PC-9 (cell line): ENCODE measurements at regions of chr11 and their contacts with region 1.

Region 1: DNA sequence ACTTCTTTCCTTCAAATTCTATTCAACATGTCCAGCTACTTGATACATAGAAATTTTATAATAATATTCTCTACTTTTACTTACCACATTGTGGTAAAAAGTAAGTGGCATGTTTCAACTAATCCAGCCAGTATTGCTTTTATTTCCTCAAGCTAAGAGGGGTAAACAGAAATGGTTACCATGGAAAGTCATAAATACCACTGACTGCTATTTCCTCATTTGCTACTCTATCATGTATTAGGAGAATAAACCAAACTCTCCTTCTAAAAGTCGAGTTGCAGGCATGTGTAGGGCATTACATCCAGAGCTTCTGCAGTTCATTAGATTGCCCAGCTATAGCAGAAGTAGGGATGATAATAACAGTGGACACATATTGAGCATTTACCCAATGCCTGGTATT is 208.4 kb downstream of the MAML2 start:
- DNase-seq: peak in 1 of 2 experiments; percentile 83
- H3K4me3 ChIP-seq: no peak overlapping the region
- H3K27ac ChIP-seq: peak overlapping the region; percentile 5; the same call in 1 of the 2 replicates
- H3K4me1 ChIP-seq: peaks cover 26% of the 10 kb centered on the region
- H3K27me3 ChIP-seq: no peaks in the 10 kb centered on the region
- CTCF ChIP-seq: no peak

Region 2: DNA sequence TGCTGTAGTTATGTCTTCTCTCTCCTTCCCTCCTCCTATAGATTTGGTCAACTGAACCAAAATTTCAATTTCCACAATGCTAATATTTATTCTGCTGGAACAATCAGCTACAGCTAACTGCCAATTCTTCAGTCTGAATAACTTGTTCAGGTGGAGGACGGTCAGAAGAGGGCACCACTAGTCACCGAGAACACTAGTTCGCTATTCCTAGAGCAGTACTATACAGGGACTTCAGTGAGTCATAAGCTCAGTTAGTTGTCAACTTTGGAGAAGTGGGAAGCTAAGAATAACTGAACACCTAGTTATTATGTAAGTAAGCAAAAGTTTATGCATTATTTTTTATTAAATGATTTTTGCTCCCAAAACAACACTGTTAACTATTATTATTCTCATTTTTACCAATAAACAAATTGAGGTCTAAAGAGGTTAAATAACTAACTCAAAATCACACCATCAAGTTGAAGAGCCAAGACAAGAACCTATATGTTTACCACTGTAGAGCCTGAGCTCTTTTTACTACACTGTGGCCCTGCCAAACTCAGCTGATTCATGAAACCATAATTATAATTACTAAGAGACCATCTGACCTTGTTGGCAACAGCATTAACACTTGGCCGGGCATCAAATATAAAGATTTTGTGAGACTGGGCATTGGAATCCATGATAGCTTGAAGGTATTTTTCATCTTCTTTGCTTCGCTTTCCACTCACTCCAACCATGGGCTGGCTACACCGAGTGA is 285.3 kb before region 1 on chr11:
- CTCF ChIA-PET with region 1: interaction called, 17 read pairs
- POLR2A ChIA-PET with region 1: no interaction called
- intact Hi-C with region 1: no loop called
- DNase-seq: peak; percentile 43 to 56
- H3K4me3 ChIP-seq: no peak overlapping the region
- H3K27ac ChIP-seq: peak overlapping the region; percentile 16
- H3K4me1 ChIP-seq: no peaks in the 10 kb centered on the region; the same call in 1 of the 2 replicates
- H3K27me3 ChIP-seq: no peaks in the 10 kb centered on the region
- CTCF ChIP-seq: peak; percentile 64; the same call in 1 of the 2 replicates

Region 3: DNA sequence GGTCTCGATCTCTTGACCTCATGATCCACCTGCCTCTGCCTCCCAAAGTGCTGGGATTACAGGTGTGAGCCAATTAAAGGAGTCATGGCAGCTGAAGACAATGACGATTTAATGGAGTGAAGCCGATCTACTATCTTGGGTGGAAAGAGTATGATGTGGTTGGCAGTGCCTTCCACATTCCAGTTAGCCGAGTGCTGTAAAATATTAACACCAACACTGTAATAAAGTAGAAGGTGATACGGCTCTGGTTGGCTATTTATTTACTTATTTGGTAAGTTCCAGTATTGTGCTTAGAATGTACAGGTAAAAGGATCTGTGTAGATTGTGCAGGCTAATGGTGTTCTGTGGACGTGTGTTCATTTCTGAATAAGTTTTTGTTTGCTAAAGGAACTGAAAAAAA is 61.1 kb before region 1 on chr11:
- CTCF ChIA-PET with region 1: interaction called, 14 read pairs
- POLR2A ChIA-PET with region 1: no interaction called
- intact Hi-C with region 1: no loop called
- DNase-seq: no peak
- H3K4me3 ChIP-seq: no peak overlapping the region
- H3K27ac ChIP-seq: no peak overlapping the region
- H3K4me1 ChIP-seq: peaks cover 9% of the 10 kb centered on the region
- H3K27me3 ChIP-seq: no peaks in the 10 kb centered on the region
- CTCF ChIP-seq: no peak

Region 4: GRCh38 chr11:96215110-96215782 is 80.6 kb after region 1 on chr11:
- CTCF ChIA-PET with region 1: no interaction called
- POLR2A ChIA-PET with region 1: no interaction called
- intact Hi-C with region 1: no loop called
- DNase-seq: no peak
- H3K4me3 ChIP-seq: no peak overlapping the region
- H3K27ac ChIP-seq: peak overlapping the region; percentile 38
- H3K4me1 ChIP-seq: peaks cover 42% of the 10 kb centered on the region
- H3K27me3 ChIP-seq: no peaks in the 10 kb centered on the region
- CTCF ChIP-seq: no peak